Activated CD4-positive, alpha-beta memory T cell treated with anti-CD3 and anti-CD28 coated beads for 36 hours (primary cell): ENCODE measurements at regions of chr2 and their contacts with region 1.

Region 1: DNA sequence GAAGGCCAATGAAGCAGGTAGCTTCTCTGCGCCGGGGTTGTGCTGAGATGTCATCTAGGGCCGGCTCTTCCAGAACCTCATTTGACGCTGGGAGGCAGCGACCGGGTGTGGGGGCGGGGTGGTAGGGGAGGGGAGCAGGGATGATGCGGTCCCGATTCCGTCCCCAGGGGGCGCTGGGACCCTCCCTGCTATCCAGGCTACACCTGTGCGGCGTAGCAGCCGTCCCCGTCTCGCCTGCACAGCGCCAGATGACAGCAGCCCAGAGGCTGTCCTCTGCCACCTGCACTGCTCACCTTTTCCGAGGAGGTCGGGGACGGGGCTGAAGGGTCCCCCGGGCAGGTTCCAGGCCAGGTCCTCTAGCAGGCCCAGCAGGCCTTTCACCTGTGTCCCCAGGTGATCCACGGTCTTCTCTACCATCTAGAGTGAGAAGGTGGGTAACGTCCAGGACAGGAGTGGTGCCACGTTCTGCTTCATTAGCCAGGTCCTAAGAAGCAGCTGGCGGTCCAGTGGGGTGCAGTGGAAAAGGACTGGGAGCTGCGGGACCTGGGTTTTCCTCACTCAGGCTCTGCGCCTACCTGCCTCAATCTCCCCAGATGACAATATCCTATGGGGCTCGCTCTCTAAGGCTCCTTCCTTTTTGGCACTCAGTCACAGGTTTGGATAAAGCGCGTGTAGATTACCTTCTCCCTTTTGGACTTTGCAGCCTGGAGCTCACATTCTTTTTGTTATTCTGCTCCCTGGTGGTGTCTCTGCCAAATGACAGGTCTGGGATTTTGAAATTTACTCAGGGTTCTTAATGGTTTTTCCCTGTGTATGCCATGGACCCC is 56.0 kb upstream of the RAB6C start:
- DNase-seq: peak; percentile 23
- H3K4me3 Mint-ChIP-seq: no peak overlapping the region
- H3K27ac Mint-ChIP-seq: no peak overlapping the region
- H3K4me1 Mint-ChIP-seq: peaks cover 3% of the 10 kb centered on the region
- H3K27me3 Mint-ChIP-seq: peaks cover 15% of the 10 kb centered on the region

Region 2: GRCh38 chr2:129771418-129772189 is 151.9 kb before region 1 on chr2:
- CTCF ChIA-PET with region 1: no interaction called
- POLR2A ChIA-PET with region 1: no interaction called
- intact Hi-C with region 1: no loop called
- DNase-seq: no peak
- H3K4me3 Mint-ChIP-seq: no peak overlapping the region
- H3K27ac Mint-ChIP-seq: no peak overlapping the region
- H3K4me1 Mint-ChIP-seq: no peaks in the 10 kb centered on the region
- H3K27me3 Mint-ChIP-seq: peaks cover 3% of the 10 kb centered on the region

Region 3: DNA sequence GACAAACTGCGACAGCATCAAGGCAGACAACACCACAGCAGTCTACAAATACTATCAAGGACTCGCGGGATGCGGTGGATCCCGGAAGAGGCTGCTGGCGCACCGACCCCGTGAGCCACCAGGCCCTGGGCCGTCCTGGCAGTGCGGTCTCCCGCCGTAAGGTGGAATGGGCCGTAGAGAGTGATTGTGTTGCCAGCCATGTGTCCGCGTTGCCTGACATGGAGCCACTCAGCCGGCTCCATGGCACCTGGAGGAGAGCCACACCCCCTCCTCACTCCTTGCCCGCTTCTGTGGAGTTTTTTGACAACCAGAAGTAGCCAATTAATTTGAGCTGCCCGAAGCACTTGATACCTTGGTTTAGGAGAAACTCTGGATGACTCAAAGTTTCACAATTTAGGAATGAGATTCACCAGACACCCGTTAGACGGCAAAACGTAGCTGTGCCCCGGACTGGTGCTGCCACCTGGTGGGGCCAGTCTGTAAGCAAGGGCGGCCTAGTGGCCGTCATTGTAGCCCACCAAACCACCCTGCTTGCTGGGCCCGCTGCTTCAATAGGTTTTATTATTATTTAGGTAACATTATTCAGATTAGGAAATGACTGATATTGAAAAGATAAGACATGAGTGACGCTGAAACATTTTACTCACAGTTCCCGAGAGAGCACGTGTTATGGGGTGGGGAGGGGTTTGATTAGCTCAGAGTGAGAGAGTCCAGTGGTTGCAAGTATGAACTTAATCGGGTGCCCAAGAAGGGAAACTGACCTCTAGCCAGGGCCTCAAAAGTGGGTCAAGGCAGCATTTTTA is 409.0 kb after region 1 on chr2:
- CTCF ChIA-PET with region 1: interaction called, 3 read pairs
- POLR2A ChIA-PET with region 1: no interaction called
- intact Hi-C with region 1: loop called (anchors 2 kb)
- DNase-seq: peak; percentile 81
- H3K4me3 Mint-ChIP-seq: no peak overlapping the region
- H3K27ac Mint-ChIP-seq: no peak overlapping the region
- H3K4me1 Mint-ChIP-seq: peaks cover 10% of the 10 kb centered on the region
- H3K27me3 Mint-ChIP-seq: peaks cover 14% of the 10 kb centered on the region